Activated CD4-positive, alpha-beta memory T cell treated with anti-CD3 and anti-CD28 coated beads, Interleukin-2, amount 10 ng/mL, durations not matched to agents 7 days and 5 days (primary cell): ENCODE measurements at regions of chr16 and their contacts with region 1.

Region 1: GRCh38 chr16:106623-107324 is 28.7 kb downstream of the MPG start:
- DNase-seq: peak; percentile 58
- H3K4me3 Mint-ChIP-seq: no peak overlapping the region
- H3K27ac Mint-ChIP-seq: no peak overlapping the region
- H3K4me1 Mint-ChIP-seq: no peaks in the 10 kb centered on the region
- H3K27me3 Mint-ChIP-seq: no peaks in the 10 kb centered on the region

Region 2: DNA sequence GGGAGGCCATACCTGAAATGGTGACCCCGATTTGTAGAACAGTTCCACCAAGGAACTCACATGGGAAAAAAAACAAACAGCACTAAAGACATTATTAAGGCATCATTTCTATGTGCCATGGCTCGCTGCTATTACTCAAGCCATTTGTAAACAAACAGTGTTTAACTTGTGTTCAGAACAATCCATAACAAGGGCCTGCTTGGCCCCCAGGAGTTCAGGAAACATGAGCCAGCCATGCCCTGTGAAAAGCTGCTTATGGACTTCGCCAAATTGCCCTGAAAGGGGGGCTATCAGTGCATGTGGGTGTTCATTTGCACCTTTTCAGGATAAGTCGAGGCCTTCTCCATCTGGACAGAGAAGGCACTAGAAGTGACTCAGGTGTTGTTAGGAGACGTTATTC is 61.3 kb before region 1 on chr16:
- CTCF ChIA-PET with region 1: no interaction called
- POLR2A ChIA-PET with region 1: no interaction called
- DNase-seq: no peak
- H3K4me3 Mint-ChIP-seq: no peak overlapping the region
- H3K27ac Mint-ChIP-seq: no peak overlapping the region
- H3K4me1 Mint-ChIP-seq: peaks cover 25% of the 10 kb centered on the region
- H3K27me3 Mint-ChIP-seq: no peaks in the 10 kb centered on the region

Region 3: GRCh38 chr16:65671-66137 is 41.1 kb before region 1 on chr16:
- CTCF ChIA-PET with region 1: interaction called, 17 read pairs
- POLR2A ChIA-PET with region 1: no interaction called
- DNase-seq: peak; percentile 89
- H3K4me3 Mint-ChIP-seq: no peak overlapping the region
- H3K27ac Mint-ChIP-seq: no peak overlapping the region
- H3K4me1 Mint-ChIP-seq: peaks cover 2% of the 10 kb centered on the region
- H3K27me3 Mint-ChIP-seq: peaks cover 13% of the 10 kb centered on the region

Region 4: GRCh38 chr16:91484-91883 is 15.3 kb before region 1 on chr16:
- CTCF ChIA-PET with region 1: interaction called, 50 read pairs
- POLR2A ChIA-PET with region 1: interaction called, 5 read pairs
- DNase-seq: no peak
- H3K4me3 Mint-ChIP-seq: no peak overlapping the region
- H3K27ac Mint-ChIP-seq: no peak overlapping the region
- H3K4me1 Mint-ChIP-seq: no peaks in the 10 kb centered on the region
- H3K27me3 Mint-ChIP-seq: no peaks in the 10 kb centered on the region

Region 5: DNA sequence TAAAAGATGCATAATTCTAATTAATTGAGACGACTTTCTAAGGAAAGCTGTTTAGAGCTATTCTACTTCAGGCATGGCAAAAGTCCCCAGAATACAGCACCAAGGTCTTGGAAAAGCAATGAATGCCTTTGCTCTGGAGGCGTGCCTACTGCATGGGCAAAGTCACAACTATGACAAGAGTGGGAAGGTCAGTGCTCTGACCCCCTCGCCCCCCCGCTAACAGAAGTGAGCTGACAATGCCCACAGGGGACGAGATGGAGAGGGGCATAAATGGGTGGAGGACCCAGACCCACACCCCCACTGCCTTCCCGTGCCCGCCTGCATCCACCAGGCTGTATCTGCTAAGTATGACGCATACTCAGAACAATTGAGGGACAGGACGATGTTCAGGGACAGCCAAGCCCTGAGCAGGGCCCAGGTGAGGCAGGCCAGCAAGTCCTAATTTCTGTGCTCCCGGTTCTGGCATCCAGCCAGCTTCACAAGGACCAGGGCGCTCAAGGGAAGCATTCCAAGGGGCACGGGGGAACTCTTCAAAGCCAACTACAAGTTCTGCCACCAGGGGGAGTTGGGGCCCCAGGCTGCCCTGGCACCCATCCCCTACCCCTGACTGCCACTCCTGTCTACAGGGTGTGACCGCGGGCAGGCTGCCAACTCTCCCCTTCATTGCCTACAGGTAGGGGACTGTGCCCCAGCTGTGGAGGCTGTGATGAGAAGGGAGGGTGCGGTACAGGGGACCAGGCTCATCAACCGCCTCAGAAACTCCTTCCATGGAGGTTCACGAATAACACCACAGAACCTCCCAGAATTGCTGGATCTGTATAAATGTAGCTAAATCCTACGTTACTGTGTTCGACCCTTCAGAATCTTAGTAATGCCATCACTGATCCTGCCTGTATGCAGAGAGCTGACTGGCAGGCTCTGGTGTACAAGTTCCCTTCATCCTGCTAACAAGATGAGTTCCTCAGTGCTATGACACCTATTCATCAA is 10.9 kb after region 1 on chr16:
- CTCF ChIA-PET with region 1: interaction called, 17 read pairs
- POLR2A ChIA-PET with region 1: no interaction called
- DNase-seq: peak; percentile 67
- H3K4me3 Mint-ChIP-seq: no peak overlapping the region
- H3K27ac Mint-ChIP-seq: no peak overlapping the region
- H3K4me1 Mint-ChIP-seq: peaks cover 12% of the 10 kb centered on the region
- H3K27me3 Mint-ChIP-seq: no peaks in the 10 kb centered on the region

Region 6: DNA sequence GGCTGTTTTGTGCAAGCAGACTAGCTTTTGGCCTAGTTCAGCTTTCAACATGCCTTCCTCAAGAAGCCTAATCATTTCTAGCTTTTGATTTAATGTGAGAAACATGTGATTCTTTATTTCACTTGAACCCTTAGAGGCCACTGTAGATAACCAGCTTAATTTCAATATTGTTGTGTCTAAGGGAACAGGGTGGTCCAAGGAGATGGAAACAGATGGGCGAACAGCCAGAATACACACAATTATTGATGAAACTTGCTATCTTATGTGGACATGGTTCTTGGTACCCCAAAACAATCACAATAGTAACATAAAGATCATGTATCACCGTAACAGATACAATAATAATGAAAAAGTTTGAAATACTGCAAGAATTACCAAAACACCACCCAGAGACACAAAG is 26.9 kb after region 1 on chr16:
- CTCF ChIA-PET with region 1: interaction called, 15 read pairs
- POLR2A ChIA-PET with region 1: no interaction called
- DNase-seq: no peak
- H3K4me3 Mint-ChIP-seq: no peak overlapping the region
- H3K27ac Mint-ChIP-seq: no peak overlapping the region
- H3K4me1 Mint-ChIP-seq: peaks cover 47% of the 10 kb centered on the region
- H3K27me3 Mint-ChIP-seq: no peaks in the 10 kb centered on the region

Region 7: GRCh38 chr16:144797-145252 is 38.1 kb after region 1 on chr16:
- CTCF ChIA-PET with region 1: no interaction called
- POLR2A ChIA-PET with region 1: no interaction called
- DNase-seq: no peak
- H3K4me3 Mint-ChIP-seq: no peak overlapping the region
- H3K27ac Mint-ChIP-seq: no peak overlapping the region
- H3K4me1 Mint-ChIP-seq: no peaks in the 10 kb centered on the region
- H3K27me3 Mint-ChIP-seq: peaks cover 23% of the 10 kb centered on the region

Region 8: DNA sequence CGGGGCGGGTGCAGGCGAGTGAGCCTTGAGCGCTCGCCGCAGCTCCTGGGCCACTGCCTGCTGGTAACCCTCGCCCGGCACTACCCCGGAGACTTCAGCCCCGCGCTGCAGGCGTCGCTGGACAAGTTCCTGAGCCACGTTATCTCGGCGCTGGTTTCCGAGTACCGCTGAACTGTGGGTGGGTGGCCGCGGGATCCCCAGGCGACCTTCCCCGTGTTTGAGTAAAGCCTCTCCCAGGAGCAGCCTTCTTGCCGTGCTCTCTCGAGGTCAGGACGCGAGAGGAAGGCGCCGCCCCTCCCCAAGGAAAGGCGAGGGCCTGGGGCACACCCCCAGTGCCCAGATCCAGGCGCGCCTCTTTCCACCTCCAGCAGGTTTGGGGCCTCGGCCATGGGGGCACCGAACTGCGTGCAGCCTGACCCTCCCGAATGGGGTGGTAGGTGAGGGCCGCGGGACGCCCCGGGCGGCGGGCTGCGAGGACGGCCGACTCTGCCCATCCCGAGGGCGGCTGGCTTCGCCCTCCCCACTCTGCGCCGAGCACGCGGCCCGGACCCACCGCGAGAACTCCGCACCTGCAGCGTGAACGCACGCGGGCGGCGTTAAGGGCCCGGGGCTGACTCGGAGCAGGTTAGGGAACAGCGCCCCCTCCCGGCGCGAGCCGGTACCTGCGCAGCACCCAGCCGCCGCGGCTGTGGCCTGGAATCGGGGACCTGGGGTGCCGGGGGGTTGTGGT is 74.3 kb after region 1 on chr16:
- CTCF ChIA-PET with region 1: interaction called, 24 read pairs
- POLR2A ChIA-PET with region 1: interaction called, 3 read pairs
- DNase-seq: peak; percentile 86
- H3K4me3 Mint-ChIP-seq: peak overlapping the region; percentile 35
- H3K27ac Mint-ChIP-seq: no peak overlapping the region
- H3K4me1 Mint-ChIP-seq: peaks cover 7% of the 10 kb centered on the region
- H3K27me3 Mint-ChIP-seq: peaks cover 23% of the 10 kb centered on the region

Region 9: DNA sequence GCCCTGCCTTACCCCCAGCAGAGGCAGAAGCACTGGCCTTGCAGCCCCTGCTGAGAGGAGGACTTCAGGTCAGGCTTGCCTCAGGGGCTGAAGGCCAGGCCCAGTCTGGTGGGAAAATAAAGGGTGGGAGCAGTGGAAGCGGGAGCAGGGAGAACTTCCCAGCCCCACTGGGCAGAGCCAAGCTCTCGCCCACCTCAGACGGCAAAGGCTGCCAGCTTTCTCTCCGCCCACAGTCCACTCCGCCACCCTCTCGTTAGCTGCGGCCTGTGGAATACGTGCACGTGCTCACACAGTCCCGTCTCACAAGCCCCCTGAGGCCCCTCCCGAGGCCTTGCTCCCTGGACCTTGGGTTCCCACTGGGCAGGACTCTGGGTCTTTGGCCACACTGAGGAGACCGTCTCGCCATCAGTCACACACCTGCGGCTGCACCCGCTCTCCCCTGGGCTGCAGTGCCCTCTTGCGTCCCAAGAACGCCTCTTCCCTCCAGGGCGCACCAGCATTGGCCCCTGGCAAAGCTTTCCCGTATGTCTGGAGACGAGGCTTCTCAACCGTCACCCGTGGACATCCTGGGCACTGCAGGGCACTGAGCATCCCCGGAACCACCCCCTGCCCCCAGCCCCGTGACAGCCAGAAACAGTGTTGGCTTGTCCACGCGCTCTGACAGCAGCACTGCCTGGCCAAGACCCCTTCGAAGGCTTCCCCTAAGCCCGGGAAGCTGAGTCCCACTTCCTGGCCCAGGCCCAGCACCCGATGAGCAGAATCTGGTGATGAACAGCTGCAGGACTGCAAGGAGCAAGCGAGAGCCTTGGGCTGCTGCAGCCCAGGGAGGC is 255.3 kb after region 1 on chr16:
- CTCF ChIA-PET with region 1: interaction called, 24 read pairs
- POLR2A ChIA-PET with region 1: interaction called, 3 read pairs
- DNase-seq: peak; percentile 81
- H3K4me3 Mint-ChIP-seq: no peak overlapping the region
- H3K27ac Mint-ChIP-seq: no peak overlapping the region
- H3K4me1 Mint-ChIP-seq: peaks cover 5% of the 10 kb centered on the region
- H3K27me3 Mint-ChIP-seq: no peaks in the 10 kb centered on the region